ENCODE measurements at regions of chr17 and their contacts with region 1.

Region 1: DNA sequence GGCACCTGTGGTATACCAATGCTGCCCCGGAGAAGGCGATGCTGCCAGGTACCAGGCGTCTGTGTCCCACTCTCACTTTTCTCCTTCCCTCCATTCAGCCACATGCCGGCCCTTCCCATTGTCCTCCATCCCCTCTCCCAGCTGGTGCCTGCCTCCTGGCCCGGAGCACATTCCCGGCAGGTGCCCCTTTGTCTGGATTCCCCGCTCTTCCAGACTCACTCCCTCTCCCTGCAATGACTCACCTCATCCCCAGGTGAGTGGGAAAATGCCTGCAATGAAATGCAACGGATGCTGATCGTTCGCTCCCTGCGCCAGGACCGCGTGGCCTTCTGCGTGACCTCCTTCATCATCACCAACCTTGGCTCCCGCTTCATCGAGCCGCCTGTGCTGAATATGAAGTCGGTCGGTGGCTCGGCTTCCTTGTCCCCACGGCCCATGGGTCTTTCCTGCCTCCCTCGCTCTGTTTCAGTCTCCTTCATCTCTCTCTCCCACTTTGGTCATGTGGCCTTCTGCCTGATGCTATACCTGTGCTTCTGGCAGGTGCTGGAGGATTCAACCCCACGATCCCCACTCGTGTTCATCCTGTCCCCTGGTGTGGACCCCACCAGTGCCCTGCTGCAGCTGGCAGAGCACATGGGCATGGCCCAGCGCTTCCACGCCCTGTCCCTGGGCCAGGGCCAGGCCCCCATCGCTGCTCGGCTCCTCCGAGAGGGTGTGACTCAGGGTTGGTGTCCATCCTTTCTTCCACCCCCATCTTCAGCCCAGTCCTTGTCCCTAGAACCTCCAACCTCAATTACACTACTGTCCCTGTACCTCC is 10.2 kb upstream of the KDM6B start:
- DNase-seq: no peak
- H3K4me3 ChIP-seq: no peak overlapping the region
- H3K27ac ChIP-seq: no peak overlapping the region
- H3K4me1 ChIP-seq: peaks cover 4% of the 10 kb centered on the region
- H3K27me3 ChIP-seq: no peaks in the 10 kb centered on the region
- CTCF ChIP-seq: no peak

Region 2: DNA sequence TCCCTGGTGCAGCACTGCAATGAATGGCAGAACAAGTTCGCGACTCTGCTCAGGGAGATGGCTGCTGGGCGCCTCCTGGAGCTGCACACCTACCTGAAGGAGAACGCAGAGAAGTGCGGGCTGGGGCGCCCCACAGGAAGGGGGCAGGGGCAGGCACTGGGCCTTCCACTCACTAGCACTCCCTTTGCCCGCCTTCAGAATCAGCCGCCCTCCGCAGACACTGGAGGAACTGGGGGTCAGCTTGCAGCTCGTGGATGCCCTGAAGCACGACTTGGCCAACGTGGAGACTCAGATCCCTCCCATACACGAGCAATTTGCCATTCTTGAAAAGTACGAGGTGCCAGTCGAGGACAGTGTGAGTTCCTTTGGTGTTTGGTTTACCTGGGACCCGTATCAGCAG is 59.9 kb before region 1 on chr17:
- CTCF ChIA-PET with region 1: no interaction called
- dilution Hi-C with region 1: loop called (anchors 5 kb)
- in situ Hi-C with region 1: no loop called
- intact Hi-C with region 1: no loop called
- DNase-seq: no peak
- H3K4me3 ChIP-seq: no peak overlapping the region
- H3K27ac ChIP-seq: no peak overlapping the region
- H3K4me1 ChIP-seq: no peaks in the 10 kb centered on the region
- H3K27me3 ChIP-seq: no peaks in the 10 kb centered on the region
- CTCF ChIP-seq: no peak

Region 3: GRCh38 chr17:7897773-7898172 is 74.0 kb after region 1 on chr17:
- CTCF ChIA-PET with region 1: no interaction called
- dilution Hi-C with region 1: loop called (anchors 10 kb)
- in situ Hi-C with region 1: no loop called
- intact Hi-C with region 1: loop called (anchors 1 kb)
- DNase-seq: peak; percentile 31
- H3K4me3 ChIP-seq: no peak overlapping the region
- H3K27ac ChIP-seq: no peak overlapping the region
- H3K4me1 ChIP-seq: no peaks in the 10 kb centered on the region
- H3K27me3 ChIP-seq: no peaks in the 10 kb centered on the region
- CTCF ChIP-seq: peak; percentile 27 to 51

Region 4: GRCh38 chr17:7915611-7916382 is 92.0 kb after region 1 on chr17 and contains the start of gene RNF227:
- CTCF ChIA-PET with region 1: interaction called, 5 read pairs
- dilution Hi-C with region 1: no loop called
- in situ Hi-C with region 1: no loop called
- intact Hi-C with region 1: loop called (anchors 5 kb)
- DNase-seq: peak; percentile 94
- H3K4me3 ChIP-seq: peak within 1 kb of the TSS; percentile 48 to 76 (median 57)
- H3K27ac ChIP-seq: peak within 1 kb of the TSS; percentile 72
- H3K4me1 ChIP-seq: peaks cover 28% of the 10 kb centered on the region
- H3K27me3 ChIP-seq: no peaks in the 10 kb centered on the region
- CTCF ChIP-seq: no peak
- total RNA-seq, gene RNF227: 5.2 to 6.4 TPM

Region 5: DNA sequence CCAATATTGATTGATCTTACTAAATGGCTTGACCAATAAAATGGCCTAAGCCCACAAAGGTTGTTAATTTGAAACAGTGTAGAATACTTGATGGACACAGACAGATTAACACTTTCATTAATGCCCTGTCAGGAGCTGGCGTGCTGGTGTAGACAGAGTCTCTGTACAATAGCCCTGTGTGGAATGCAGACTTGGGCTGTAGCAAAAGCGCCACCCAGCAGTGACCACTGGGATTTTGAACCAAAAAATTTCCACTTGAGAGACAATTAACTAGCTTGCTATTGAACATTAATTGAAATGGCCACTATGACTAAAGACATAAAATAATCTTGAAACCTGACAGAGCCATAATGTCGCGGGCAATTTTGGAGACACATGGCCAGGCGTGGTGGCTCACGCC is 158.9 kb after region 1 on chr17:
- CTCF ChIA-PET with region 1: no interaction called
- dilution Hi-C with region 1: no loop called
- in situ Hi-C with region 1: no loop called
- intact Hi-C with region 1: no loop called
- DNase-seq: no peak
- H3K4me3 ChIP-seq: no peak overlapping the region
- H3K27ac ChIP-seq: no peak overlapping the region
- H3K4me1 ChIP-seq: peaks cover 16% of the 10 kb centered on the region
- H3K27me3 ChIP-seq: no peaks in the 10 kb centered on the region
- CTCF ChIP-seq: no peak

Measured in mammary epithelial cell (primary cell).